ENCODE measurements at regions of chr17 and their contacts with region 1.

Region 1: DNA sequence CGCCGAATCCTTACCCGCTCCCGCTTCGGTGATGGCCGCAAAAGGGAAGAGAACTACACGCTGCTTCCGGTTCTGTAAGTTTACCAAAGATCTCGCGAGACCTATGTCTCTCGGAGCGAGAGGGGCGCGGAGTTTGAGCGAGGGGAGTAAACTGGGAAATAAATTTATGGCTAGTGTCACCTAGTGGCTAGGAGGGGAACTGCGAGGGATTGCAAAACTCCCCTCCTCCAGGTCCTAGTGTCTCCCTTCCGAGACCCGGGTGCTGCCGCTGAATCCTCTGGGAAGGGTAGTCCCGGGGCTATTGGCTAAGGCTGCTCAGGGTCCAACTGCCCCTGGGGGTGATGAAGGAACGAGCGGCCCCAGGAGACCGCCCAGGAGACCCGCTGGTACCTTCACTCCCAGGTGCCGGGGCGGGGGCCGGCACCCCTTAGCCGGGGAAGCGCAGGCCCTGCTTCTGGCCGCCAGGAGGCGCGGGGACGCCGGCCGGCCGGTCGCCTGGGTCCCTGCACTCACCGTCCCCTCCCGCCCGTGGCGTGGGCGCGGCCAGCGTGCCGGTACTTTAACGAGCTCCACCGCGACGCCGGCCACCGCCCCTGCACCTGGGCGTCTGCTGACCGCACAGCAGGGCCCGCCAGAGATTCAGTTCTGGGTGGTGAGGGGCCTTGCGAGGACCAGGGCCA is at the start of gene RPL26:
- DNase-seq: peak; percentile 89 to 98 (median 93)
- ATAC-seq: peak; percentile 86
- H3K4me3 ChIP-seq: peak within 1 kb of the TSS; percentile 95
- H3K4me3 Mint-ChIP-seq: peak within 1 kb of the TSS; percentile 95
- H3K27ac ChIP-seq: peak within 1 kb of the TSS; percentile 72 to 76
- H3K27ac Mint-ChIP-seq: peak within 1 kb of the TSS; percentile 91
- H3K4me1 ChIP-seq: peaks cover 47% of the 10 kb centered on the region
- H3K4me1 Mint-ChIP-seq: peaks cover 64% of the 10 kb centered on the region
- H3K27me3 ChIP-seq: no peaks in the 10 kb centered on the region
- H3K27me3 Mint-ChIP-seq: no peaks in the 10 kb centered on the region
- CTCF ChIP-seq: peak; percentile 100
- total RNA-seq, gene RPL26: 2,959 to 3,104 TPM

Region 2: DNA sequence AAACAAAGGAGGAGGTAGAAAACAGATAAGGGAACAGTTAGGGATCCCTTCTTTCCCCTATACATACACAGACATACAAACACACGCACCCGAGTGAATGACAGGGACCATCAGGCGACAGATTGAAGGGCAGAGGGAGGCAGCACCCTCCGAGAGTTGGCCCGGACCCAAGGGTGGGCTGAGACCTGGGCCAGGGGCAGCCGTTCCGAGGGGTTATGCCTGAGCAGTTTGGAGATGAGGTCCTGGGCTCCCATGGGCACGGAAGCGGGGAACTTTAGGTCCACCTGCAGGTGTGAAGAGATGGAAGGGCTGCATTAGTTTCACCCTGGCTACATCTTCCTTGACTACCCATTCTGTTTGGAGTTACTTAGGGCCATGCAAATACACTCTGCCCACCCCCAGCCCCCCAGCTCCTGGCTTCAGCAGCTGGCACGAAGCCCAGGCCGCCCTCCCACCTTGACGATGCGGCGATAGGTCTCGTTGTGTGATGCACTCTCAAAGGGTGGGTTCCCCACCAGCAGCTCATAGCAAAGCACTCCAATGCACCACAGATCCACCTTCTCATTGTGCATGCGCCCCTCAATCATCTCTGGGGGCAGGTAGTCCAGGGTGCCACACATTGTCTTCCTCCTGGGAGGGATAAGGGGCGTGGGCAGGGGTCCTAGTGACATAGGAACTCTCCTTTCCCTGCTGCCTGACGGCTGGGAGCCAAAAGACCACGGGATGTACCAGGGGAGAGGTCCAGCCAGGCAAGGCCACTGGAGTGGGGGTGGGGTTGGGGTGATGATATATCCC is 178.3 kb before region 1 on chr17:
- CTCF ChIA-PET with region 1: no interaction called
- POLR2A ChIA-PET with region 1: no interaction called
- intact Hi-C with region 1: loop called in 1 of 2 experiments (anchors 1 kb)
- DNase-seq: no peak
- ATAC-seq: no peak
- H3K4me3 ChIP-seq: no peak overlapping the region
- H3K4me3 Mint-ChIP-seq: no peak overlapping the region
- H3K27ac ChIP-seq: no peak overlapping the region
- H3K27ac Mint-ChIP-seq: no peak overlapping the region
- H3K4me1 ChIP-seq: peaks cover 8% of the 10 kb centered on the region
- H3K4me1 Mint-ChIP-seq: peaks cover 7% of the 10 kb centered on the region
- H3K27me3 ChIP-seq: no peaks in the 10 kb centered on the region
- H3K27me3 Mint-ChIP-seq: no peaks in the 10 kb centered on the region
- CTCF ChIP-seq: no peak

Region 3: DNA sequence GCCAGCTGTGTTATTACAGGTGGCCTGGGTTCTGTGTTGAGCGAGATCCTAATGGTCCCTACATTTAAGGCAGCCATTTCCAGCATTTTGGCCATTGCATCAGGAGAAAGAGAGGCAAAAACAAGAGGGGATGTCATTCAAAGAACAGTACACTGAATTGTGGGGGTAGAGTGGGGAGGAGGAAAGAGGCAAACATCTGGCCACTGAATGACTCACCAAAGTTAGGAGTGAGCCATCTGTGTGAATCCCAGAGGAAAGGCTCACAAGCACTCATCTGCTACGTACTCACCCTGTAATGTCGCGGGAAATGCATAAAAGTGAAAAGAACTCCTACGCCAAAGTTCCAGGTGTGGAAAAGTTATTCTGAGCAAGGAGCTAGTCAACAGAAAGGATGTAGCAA is 23.5 kb before region 1 on chr17:
- CTCF ChIA-PET with region 1: no interaction called
- POLR2A ChIA-PET with region 1: no interaction called
- intact Hi-C with region 1: no loop called
- DNase-seq: no peak
- ATAC-seq: no peak
- H3K4me3 ChIP-seq: no peak overlapping the region
- H3K4me3 Mint-ChIP-seq: no peak overlapping the region
- H3K27ac ChIP-seq: no peak overlapping the region
- H3K27ac Mint-ChIP-seq: no peak overlapping the region
- H3K4me1 ChIP-seq: no peaks in the 10 kb centered on the region
- H3K4me1 Mint-ChIP-seq: peaks cover 19% of the 10 kb centered on the region
- H3K27me3 ChIP-seq: no peaks in the 10 kb centered on the region
- H3K27me3 Mint-ChIP-seq: no peaks in the 10 kb centered on the region
- CTCF ChIP-seq: no peak

Region 4: DNA sequence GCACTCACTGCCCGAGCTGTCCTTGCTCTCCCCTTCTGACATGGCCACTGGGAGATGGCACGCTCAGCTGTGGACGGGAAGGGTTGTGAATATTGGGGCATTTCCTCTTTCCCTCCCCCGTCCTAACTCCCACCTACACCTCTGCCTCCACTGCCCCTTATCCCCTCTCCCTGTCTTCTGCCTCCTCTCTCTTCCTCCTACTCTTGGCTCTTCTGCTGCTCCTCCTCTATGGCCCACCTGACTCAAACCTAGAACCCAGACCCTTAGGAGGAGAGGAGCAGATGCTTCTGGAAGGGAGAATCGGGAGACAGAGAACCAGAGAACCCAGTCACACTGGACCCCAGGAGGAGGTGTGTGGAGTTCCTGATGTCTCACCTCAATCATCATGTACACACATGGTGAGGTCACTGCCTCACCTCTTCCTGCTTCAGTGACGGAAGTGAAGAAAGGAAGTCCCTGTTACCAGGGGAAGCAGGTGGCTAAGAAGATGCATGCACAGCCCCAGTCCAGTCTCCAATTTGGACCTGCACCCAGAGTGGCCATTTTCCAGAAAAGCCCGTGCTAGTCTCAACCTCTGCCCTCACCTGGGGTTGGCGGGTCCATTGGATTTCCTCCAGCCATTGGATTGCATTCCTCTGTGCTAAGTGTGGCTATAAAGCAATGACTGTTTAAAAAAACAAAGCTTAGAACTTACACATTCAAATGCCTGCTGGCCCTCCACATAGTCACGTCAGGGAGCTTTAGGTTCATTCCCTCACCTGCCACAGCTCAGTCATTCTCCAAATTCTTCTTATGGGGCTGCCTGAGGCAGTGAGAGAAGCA is 10.3 kb after region 1 on chr17:
- CTCF ChIA-PET with region 1: interaction called, 14 read pairs
- POLR2A ChIA-PET with region 1: interaction called, 6 read pairs
- intact Hi-C with region 1: no loop called
- DNase-seq: peak in 12 of 14 experiments; percentile 15 to 83 (median 33)
- ATAC-seq: peak; percentile 99
- H3K4me3 ChIP-seq: no peak overlapping the region
- H3K4me3 Mint-ChIP-seq: peak overlapping the region; percentile 39
- H3K27ac ChIP-seq: no peak overlapping the region
- H3K27ac Mint-ChIP-seq: peak overlapping the region; percentile 83
- H3K4me1 ChIP-seq: peaks cover 17% of the 10 kb centered on the region
- H3K4me1 Mint-ChIP-seq: peaks cover 11% of the 10 kb centered on the region
- H3K27me3 ChIP-seq: peaks cover 11% of the 10 kb centered on the region in 2 experiments
- H3K27me3 Mint-ChIP-seq: peaks cover 18% of the 10 kb centered on the region
- CTCF ChIP-seq: no peak

Region 5: DNA sequence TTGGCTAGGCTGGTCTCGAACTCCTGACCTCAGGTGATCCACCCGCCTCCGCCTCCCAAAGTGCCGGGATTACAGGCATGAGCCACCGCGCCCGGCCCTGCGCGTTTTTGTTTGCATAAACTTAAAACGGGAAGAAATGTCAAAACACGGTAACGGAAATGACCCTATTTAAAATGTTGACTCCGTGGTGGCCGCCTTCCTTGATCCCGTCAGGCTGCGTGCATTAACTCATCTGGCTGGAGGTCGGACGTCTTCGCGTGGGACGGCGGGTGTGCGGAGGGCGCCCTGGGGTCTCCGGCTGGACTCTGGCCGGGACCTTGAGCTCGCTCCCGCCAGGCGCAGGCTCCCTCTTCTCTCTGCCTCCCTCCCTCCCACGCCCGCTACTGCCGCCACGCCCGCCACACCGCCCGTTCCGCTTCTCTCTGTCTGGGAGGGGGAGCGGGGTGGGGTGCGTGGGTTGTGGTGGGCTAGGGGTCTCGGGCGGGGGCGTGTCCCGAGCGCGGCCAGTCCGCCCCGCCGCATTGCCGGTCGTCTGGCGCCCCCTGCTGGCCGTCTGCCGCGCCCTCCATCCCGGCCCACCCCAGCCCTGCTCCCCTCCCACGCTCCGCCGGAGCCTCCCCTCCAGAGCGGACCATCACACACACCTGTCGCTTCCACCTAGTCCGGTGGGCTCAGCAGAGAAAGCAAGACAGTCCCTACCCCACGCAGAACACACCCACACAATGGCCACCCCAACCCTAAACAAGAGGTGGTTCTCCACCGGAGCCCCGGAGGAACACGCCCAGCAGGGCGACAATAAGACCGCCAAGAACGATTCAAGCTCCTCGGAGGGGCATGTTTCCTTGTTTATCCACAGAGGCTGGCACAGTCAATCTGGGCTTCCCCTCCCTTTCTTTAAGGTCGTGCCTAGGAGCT is 362.6 kb after region 1 on chr17:
- CTCF ChIA-PET with region 1: interaction called, 10 read pairs
- POLR2A ChIA-PET with region 1: interaction called, 9 read pairs
- intact Hi-C with region 1: loop called (anchors 1 to 10 kb)
- DNase-seq: peak; percentile 64 to 88 (median 76)
- ATAC-seq: peak; percentile 80
- H3K4me3 ChIP-seq: peak overlapping the region; percentile 78
- H3K4me3 Mint-ChIP-seq: peak overlapping the region; percentile 93
- H3K27ac ChIP-seq: peak overlapping the region; percentile 44 to 51
- H3K27ac Mint-ChIP-seq: peak overlapping the region; percentile 83
- H3K4me1 ChIP-seq: peaks cover 23% of the 10 kb centered on the region
- H3K4me1 Mint-ChIP-seq: peaks cover 12% of the 10 kb centered on the region
- H3K27me3 ChIP-seq: no peaks in the 10 kb centered on the region
- H3K27me3 Mint-ChIP-seq: no peaks in the 10 kb centered on the region
- CTCF ChIP-seq: peak; percentile 99

Measured in CD4-positive, alpha-beta T cell (primary cell).